PC-3 (cell line): ENCODE measurements at regions of chr5 and their contacts with region 1.

Region 1: GRCh38 chr5:168268949-168269943 is 22.2 kb upstream of the WWC1 start:
- DNase-seq: peak; percentile 95
- ATAC-seq: peak; percentile 95
- H3K4me3 ChIP-seq: peak overlapping the region; percentile 56
- H3K27ac ChIP-seq: no peak overlapping the region
- H3K4me1 ChIP-seq: peaks cover 18% of the 10 kb centered on the region
- H3K27me3 ChIP-seq: no peaks in the 10 kb centered on the region
- CTCF ChIP-seq: peak; percentile 91

Region 2: GRCh38 chr5:168219515-168220410 is 49.5 kb before region 1 on chr5:
- CTCF ChIA-PET with region 1: no interaction called
- POLR2A ChIA-PET with region 1: no interaction called
- intact Hi-C with region 1: no loop called
- DNase-seq: peak; percentile 74
- ATAC-seq: peak; percentile 43
- H3K4me3 ChIP-seq: no peak overlapping the region
- H3K27ac ChIP-seq: no peak overlapping the region
- H3K4me1 ChIP-seq: no peaks in the 10 kb centered on the region
- H3K27me3 ChIP-seq: peaks cover 61% of the 10 kb centered on the region
- CTCF ChIP-seq: peak; percentile 79

Region 3: DNA sequence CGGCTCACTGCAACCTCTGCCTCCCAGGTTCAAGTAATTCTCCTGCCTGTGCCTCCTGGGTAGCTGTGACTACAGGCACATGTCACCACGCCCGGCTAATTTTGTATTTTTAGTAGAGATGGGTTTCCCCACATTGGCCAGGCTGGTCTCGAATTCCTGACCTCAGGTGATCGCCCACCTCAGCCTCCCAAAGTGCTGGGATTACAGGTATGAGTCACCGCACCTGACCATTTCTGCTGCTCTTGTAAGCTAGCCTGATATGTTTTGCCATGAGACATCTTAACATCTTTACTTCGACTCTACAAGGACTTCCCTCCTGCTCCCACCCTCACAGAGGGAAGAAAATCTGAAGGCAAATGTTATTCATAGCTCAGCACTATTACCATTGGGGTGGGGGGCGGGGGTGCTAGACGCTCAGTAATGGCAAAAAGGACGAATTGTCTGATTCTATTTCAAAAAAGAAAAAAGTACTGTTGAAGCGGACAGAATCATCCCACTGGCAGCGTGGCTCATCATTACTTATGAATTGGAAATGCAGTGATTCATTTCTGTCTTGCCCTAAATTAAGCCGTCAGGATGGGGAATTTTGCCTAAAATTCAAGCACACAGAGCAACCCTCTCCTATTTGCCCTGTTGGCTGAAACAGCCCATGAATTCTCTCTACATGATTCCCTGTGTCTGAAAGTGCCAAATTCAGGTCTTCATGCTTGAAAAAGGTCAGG is 24.2 kb before region 1 on chr5:
- CTCF ChIA-PET with region 1: no interaction called
- POLR2A ChIA-PET with region 1: no interaction called
- intact Hi-C with region 1: no loop called
- DNase-seq: no peak
- ATAC-seq: no peak
- H3K4me3 ChIP-seq: no peak overlapping the region
- H3K27ac ChIP-seq: no peak overlapping the region
- H3K4me1 ChIP-seq: no peaks in the 10 kb centered on the region
- H3K27me3 ChIP-seq: no peaks in the 10 kb centered on the region
- CTCF ChIP-seq: no peak

Region 4: DNA sequence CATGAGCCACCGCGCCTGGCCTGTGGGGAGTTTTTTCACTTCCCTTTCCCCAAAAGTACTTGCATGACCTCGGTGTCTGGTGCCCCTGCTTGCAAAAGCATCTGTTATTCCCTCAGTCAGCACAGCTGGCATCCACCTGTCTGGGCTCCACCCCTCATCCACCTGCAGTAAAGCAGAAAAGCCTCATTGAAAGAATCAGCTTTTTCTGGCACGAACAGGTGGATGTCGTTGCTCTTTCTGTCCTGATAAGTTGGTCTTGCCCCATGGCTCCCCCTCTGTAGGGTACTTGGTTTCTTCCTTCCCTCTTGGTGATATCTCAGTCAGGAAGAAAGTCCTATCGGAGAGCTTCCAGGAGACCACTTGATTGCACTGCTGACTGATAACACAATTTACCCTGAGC is 59.6 kb after region 1 on chr5:
- CTCF ChIA-PET with region 1: no interaction called
- POLR2A ChIA-PET with region 1: interaction called, 14 read pairs
- intact Hi-C with region 1: no loop called
- DNase-seq: peak; percentile 30
- ATAC-seq: no peak
- H3K4me3 ChIP-seq: peak overlapping the region; percentile 44; the same call in 1 of the 2 replicates
- H3K27ac ChIP-seq: peak overlapping the region; percentile 21; the same call in 1 of the 2 replicates
- H3K4me1 ChIP-seq: peaks cover 74% of the 10 kb centered on the region
- H3K27me3 ChIP-seq: no peaks in the 10 kb centered on the region
- CTCF ChIP-seq: no peak

Region 5: DNA sequence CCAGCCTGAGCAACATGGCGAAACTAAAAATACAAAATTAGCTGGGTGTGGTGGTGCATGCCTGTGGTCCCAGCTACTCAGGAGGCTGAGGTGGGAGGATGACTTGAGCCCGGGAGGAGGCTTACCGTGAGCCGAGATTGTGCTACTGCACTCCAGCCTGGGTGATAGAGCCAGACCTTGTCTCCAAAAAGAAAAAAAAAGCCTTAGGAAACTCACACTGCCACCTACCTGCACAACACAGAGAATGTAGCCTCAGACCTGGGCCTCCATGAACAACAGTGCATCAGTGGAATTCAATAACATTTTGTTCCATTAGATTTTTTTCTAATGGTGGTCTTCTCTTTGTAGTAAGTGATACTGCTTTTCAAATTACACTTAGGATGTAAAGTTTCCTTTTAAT is 153.2 kb after region 1 on chr5:
- CTCF ChIA-PET with region 1: interaction called, 5 read pairs
- POLR2A ChIA-PET with region 1: no interaction called
- intact Hi-C with region 1: loop called (anchors 1 kb)
- DNase-seq: peak; percentile 34
- ATAC-seq: peak; percentile 75
- H3K4me3 ChIP-seq: no peak overlapping the region
- H3K27ac ChIP-seq: no peak overlapping the region
- H3K4me1 ChIP-seq: no peaks in the 10 kb centered on the region
- H3K27me3 ChIP-seq: no peaks in the 10 kb centered on the region
- CTCF ChIP-seq: peak; percentile 53

Region 6: GRCh38 chr5:168434001-168434400 is 164.8 kb after region 1 on chr5:
- CTCF ChIA-PET with region 1: no interaction called
- POLR2A ChIA-PET with region 1: no interaction called
- intact Hi-C with region 1: no loop called
- DNase-seq: no peak
- ATAC-seq: no peak
- H3K4me3 ChIP-seq: no peak overlapping the region
- H3K27ac ChIP-seq: no peak overlapping the region
- H3K4me1 ChIP-seq: no peaks in the 10 kb centered on the region
- H3K27me3 ChIP-seq: no peaks in the 10 kb centered on the region
- CTCF ChIP-seq: no peak

Region 7: GRCh38 chr5:168479166-168479565 is 209.9 kb after region 1 on chr5:
- CTCF ChIA-PET with region 1: no interaction called
- POLR2A ChIA-PET with region 1: no interaction called
- intact Hi-C with region 1: loop called (anchors 2 kb)
- DNase-seq: peak; percentile 77
- ATAC-seq: peak; percentile 97
- H3K4me3 ChIP-seq: 0 out of 2 replicates have a peak overlapping the region, but pooled peaks have one; percentile 13
- H3K27ac ChIP-seq: peak overlapping the region; percentile 85
- H3K4me1 ChIP-seq: peaks cover 22% of the 10 kb centered on the region
- H3K27me3 ChIP-seq: no peaks in the 10 kb centered on the region
- CTCF ChIP-seq: no peak

Region 8: DNA sequence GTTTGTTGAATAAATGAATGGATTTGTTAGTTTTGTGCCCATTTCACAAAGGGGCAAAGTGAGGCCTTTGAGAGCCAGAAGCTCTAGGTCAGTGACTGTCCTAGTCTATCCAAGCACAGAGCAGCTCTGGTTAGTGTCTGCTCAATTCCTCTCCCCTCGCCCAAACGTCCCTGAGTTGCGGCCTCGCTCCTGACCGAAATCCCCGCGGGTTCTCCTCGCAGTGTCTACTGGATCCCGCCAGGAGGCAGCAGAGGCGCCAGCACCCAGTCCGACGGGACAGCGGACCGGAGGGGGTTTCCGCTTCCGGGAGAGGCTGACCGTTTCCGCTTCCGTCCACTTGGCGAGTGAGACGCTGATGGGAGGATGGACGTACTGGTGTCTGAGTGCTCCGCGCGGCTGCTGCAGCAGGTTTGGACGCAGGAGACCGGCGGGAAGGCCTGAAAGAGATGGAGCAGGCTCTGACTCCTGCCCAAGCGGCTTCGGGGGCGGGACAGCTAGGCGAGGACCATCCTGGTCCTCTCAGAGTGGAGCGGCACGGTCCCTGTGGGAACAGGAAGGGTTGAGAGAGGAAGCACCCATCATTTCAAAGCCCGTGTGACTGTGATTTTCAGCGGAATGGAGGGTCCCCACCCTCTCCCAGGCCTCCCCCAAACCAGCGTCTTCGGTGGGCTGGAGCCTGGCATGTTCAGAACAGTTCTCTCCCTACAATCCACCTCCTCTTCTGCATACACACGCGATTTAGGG is 217.1 kb after region 1 on chr5 and contains the start of gene RARS1:
- CTCF ChIA-PET with region 1: no interaction called
- POLR2A ChIA-PET with region 1: no interaction called
- intact Hi-C with region 1: loop called (anchors 2 kb)
- DNase-seq: peak; percentile 89
- ATAC-seq: peak; percentile 94
- H3K4me3 ChIP-seq: peak within 1 kb of the TSS; percentile 100
- H3K27ac ChIP-seq: peak within 1 kb of the TSS; percentile 9; the same call in 1 of the 2 replicates
- H3K4me1 ChIP-seq: peaks cover 9% of the 10 kb centered on the region; the same call in 1 of the 2 replicates
- H3K27me3 ChIP-seq: no peaks in the 10 kb centered on the region
- CTCF ChIP-seq: peak; percentile 81
- total RNA-seq, gene RARS1: 63.6 and 78.1 TPM in 2 replicates